Activated naive CD4-positive, alpha-beta T cell treated with anti-CD3 and anti-CD28 coated beads for 36 hours (primary cell): ENCODE measurements at regions of chr17 and their contacts with region 1.

Region 1: DNA sequence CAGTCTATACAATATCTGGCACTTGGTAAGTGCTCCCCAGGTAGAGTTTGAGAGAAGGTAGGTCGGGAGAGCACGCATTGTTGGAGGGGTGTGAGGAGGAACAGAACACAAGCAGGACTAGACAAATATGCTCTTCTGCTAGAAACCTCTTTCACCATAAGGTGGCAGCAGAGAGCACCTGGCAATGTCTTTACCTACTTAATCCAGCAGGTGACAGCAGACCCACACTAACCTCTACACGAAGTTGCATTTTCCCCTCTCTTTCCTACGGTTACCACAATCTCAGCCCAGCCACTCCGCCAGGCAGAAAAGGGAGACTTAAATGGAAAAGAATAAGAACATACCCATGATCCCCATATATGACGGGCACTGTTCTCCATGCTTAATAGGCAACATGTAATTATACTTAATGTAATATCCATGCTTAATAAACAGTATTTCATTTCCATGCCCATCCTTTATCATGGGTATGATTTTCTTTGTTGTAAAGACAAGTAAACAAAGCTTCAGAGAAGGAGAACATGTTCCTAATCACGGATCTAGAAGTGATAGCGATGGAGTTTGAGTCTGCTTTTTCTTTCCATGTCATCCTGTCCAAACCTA is 55.1 kb upstream of the CCL2 start:
- DNase-seq: peak; percentile 82
- H3K4me3 Mint-ChIP-seq: no peak overlapping the region
- H3K27ac Mint-ChIP-seq: no peak overlapping the region
- H3K4me1 Mint-ChIP-seq: peaks cover 12% of the 10 kb centered on the region
- H3K27me3 Mint-ChIP-seq: peaks cover 33% of the 10 kb centered on the region

Region 2: GRCh38 chr17:34146440-34147043 is 53.5 kb before region 1 on chr17:
- CTCF ChIA-PET with region 1: no interaction called
- intact Hi-C with region 1: no loop called
- DNase-seq: peak; percentile 80
- H3K4me3 Mint-ChIP-seq: no peak overlapping the region
- H3K27ac Mint-ChIP-seq: no peak overlapping the region
- H3K4me1 Mint-ChIP-seq: no peaks in the 10 kb centered on the region
- H3K27me3 Mint-ChIP-seq: peaks cover 24% of the 10 kb centered on the region

Region 3: DNA sequence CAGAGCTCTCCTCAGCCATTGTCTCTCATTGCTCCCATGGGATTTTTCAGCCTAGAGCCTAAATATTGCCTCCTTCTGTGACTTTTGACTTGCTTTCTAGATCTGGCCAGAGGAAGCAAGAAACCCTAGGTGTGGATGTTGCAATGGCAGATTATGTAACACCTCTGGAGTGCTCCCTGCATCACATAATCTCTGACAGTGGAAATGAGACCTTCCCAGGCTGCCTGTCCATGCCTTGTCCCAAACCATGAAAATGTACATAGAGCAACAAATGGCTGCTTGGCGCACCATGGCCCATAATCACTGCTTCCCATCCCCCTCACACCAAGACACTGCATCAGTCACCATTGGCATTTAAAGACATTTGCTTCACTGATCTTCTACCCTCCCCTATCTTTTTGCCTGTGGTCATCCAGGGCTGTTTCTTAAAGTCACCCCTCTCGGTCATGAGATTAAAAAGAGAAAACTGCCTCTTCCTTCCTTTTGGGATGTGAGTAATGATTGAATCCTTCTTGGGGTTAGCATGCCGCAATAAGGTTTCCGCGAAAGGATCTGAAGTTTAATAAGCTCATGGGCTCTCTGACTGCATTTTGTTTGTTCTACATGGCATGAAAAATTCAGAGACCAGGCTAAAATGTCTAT is 20.8 kb after region 1 on chr17:
- CTCF ChIA-PET with region 1: interaction called, 12 read pairs
- intact Hi-C with region 1: no loop called
- DNase-seq: no peak
- H3K4me3 Mint-ChIP-seq: no peak overlapping the region
- H3K27ac Mint-ChIP-seq: no peak overlapping the region
- H3K4me1 Mint-ChIP-seq: no peaks in the 10 kb centered on the region
- H3K27me3 Mint-ChIP-seq: peaks cover 36% of the 10 kb centered on the region

Region 4: DNA sequence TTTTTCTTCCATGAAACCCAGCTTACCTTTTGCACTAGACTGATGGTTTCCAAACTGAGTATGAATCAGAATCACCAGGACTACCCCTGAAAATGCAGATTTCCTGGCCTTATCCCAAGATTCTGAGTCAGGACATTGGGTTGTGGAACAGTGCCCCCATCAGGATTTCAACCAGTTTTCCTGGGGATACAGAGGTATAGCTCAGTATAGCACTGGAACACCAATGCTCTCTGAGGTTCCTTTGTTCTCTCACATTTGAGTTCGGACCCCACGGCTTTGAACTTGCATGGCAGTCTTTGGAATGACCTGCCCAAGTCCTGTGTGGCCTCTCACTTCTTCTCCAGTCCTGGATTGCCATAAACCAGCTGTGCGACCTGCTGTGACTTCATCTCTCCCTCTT is 106.4 kb after region 1 on chr17:
- CTCF ChIA-PET with region 1: no interaction called
- intact Hi-C with region 1: loop called (anchors 2 kb)
- DNase-seq: no peak
- H3K4me3 Mint-ChIP-seq: no peak overlapping the region
- H3K27ac Mint-ChIP-seq: no peak overlapping the region
- H3K4me1 Mint-ChIP-seq: peaks cover 2% of the 10 kb centered on the region
- H3K27me3 Mint-ChIP-seq: peaks cover 5% of the 10 kb centered on the region

Region 5: GRCh38 chr17:34354637-34355036 is 154.6 kb after region 1 on chr17:
- CTCF ChIA-PET with region 1: interaction called, 241 read pairs
- intact Hi-C with region 1: no loop called
- DNase-seq: no peak
- H3K4me3 Mint-ChIP-seq: no peak overlapping the region
- H3K27ac Mint-ChIP-seq: no peak overlapping the region
- H3K4me1 Mint-ChIP-seq: no peaks in the 10 kb centered on the region
- H3K27me3 Mint-ChIP-seq: peaks cover 10% of the 10 kb centered on the region